Activated CD8-positive, alpha-beta memory T cell treated with anti-CD3 and anti-CD28 coated beads, Interleukin-2, amount 10 ng/mL, durations not matched to agents 7 days and 5 days (primary cell): ENCODE measurements at regions of chr17 and their contacts with region 1.

Region 1: DNA sequence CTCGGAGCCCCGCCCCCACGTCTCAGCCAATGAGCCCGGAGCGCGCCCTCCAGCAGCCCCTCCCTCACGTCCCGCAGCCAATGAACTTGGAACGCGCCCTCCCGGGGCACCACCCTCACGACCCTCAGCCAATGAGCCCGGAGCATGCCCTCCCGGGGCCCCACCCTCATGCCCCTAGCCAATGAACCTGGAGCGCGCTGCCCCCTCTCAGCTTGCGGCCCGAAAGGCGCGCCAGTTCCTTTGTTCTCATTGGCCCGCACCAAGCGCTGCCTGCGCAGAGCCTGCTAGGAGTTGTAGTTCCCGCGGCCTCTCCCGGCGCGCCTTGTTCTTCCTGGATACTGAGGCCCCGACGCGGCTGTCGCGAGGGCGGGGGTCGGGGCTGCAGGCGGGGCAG is at the start of gene LRRC45:
- DNase-seq: peak; percentile 100
- ATAC-seq: peak; percentile 95
- H3K4me3 Mint-ChIP-seq: peak within 1 kb of the TSS; percentile 82
- H3K27ac Mint-ChIP-seq: peak within 1 kb of the TSS; percentile 78
- H3K4me1 Mint-ChIP-seq: peaks cover 32% of the 10 kb centered on the region
- H3K27me3 Mint-ChIP-seq: no peaks in the 10 kb centered on the region
- total RNA-seq, gene LRRC45: 45.4 to 61.6 TPM

Region 2: DNA sequence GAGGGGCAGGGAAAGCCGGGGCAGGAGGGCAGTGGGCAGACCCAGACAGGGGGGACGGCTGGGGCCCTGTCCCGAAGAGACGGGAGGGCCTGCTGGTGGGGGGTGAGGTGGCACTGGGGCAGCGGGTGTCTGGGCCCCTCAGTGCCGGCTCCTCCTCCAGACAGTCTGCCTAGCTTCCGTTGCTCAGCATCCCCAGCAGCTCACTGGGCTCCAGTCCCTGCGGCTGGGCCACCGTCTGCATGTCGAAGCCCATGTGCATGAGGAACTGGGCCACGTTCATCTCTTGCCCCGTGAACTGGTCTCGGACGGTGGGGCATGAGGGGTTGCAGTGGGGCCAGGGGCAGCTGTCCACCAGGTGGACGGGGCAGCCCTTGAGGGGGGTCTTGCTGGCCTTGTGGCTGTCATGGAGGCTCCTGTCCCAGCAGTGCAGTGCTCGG is 70.2 kb before region 1 on chr17:
- CTCF ChIA-PET with region 1: interaction called, 14 read pairs
- DNase-seq: no peak
- ATAC-seq: no peak
- H3K4me3 Mint-ChIP-seq: no peak overlapping the region
- H3K27ac Mint-ChIP-seq: no peak overlapping the region
- H3K4me1 Mint-ChIP-seq: no peaks in the 10 kb centered on the region
- H3K27me3 Mint-ChIP-seq: peaks cover 14% of the 10 kb centered on the region

Region 3: GRCh38 chr17:81967533-81968395 is 55.2 kb before region 1 on chr17:
- CTCF ChIA-PET with region 1: interaction called, 20 read pairs
- DNase-seq: peak; percentile 90
- ATAC-seq: peak; percentile 97
- H3K4me3 Mint-ChIP-seq: peak overlapping the region; percentile 47
- H3K27ac Mint-ChIP-seq: peak overlapping the region; percentile 43
- H3K4me1 Mint-ChIP-seq: peaks cover 7% of the 10 kb centered on the region
- H3K27me3 Mint-ChIP-seq: peaks cover 23% of the 10 kb centered on the region

Region 4: GRCh38 chr17:82003411-82004381 is 19.3 kb before region 1 on chr17:
- CTCF ChIA-PET with region 1: interaction called, 21 read pairs
- DNase-seq: no peak
- ATAC-seq: no peak
- H3K4me3 Mint-ChIP-seq: no peak overlapping the region
- H3K27ac Mint-ChIP-seq: no peak overlapping the region
- H3K4me1 Mint-ChIP-seq: no peaks in the 10 kb centered on the region
- H3K27me3 Mint-ChIP-seq: no peaks in the 10 kb centered on the region

Region 5: DNA sequence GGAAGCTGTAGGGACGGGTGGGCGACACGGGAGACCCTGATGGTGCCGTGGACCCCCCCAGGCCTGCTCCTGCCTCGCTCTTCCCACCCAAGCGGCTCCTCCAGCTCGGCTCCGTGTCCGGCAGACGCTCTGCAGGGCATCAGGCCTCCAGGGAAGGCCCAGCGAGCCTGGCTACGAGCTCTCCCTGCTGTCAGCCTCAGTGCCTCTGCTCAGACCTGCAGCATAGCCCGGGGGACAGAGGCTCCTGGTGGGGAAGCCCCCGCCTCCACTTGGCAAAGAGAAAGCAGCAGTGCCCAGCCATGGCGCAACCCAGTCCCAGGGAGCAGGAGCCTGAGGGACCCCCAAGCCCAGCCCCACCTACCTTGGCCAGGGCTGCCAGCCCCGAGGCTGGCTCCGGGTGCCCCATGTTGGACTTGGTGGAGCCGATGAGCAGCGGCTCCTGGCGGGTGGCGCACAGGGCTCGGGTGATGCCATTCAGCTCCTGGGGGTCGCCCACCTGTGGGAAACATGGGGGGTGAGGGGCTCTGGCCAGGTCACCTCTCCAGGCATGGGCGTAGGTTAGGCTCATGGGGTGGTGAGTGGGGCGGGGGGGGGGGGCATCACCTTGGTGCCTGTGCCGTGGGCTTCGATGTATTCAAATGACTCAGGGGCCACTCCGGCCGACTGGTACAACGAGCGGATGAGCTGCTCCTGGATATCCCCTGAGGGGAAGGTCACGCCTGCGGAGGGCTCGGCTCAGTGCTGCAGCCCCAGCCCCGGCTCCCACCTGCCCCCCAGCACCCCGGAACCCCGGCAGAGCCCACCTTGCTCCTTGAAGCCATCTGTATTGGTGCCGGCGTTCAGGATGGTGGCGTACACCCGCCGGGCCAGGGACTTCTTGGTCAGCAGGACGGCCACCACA is 69.4 kb after region 1 on chr17:
- CTCF ChIA-PET with region 1: no interaction called
- DNase-seq: no peak
- ATAC-seq: no peak
- H3K4me3 Mint-ChIP-seq: no peak overlapping the region
- H3K27ac Mint-ChIP-seq: no peak overlapping the region
- H3K4me1 Mint-ChIP-seq: peaks cover 8% of the 10 kb centered on the region
- H3K27me3 Mint-ChIP-seq: no peaks in the 10 kb centered on the region

Region 6: GRCh38 chr17:82153745-82154375 is 130.9 kb after region 1 on chr17:
- CTCF ChIA-PET with region 1: interaction called, 13 read pairs
- DNase-seq: peak; percentile 84
- ATAC-seq: peak; percentile 98
- H3K4me3 Mint-ChIP-seq: no peak overlapping the region
- H3K27ac Mint-ChIP-seq: no peak overlapping the region
- H3K4me1 Mint-ChIP-seq: peaks cover 2% of the 10 kb centered on the region
- H3K27me3 Mint-ChIP-seq: no peaks in the 10 kb centered on the region

Region 7: DNA sequence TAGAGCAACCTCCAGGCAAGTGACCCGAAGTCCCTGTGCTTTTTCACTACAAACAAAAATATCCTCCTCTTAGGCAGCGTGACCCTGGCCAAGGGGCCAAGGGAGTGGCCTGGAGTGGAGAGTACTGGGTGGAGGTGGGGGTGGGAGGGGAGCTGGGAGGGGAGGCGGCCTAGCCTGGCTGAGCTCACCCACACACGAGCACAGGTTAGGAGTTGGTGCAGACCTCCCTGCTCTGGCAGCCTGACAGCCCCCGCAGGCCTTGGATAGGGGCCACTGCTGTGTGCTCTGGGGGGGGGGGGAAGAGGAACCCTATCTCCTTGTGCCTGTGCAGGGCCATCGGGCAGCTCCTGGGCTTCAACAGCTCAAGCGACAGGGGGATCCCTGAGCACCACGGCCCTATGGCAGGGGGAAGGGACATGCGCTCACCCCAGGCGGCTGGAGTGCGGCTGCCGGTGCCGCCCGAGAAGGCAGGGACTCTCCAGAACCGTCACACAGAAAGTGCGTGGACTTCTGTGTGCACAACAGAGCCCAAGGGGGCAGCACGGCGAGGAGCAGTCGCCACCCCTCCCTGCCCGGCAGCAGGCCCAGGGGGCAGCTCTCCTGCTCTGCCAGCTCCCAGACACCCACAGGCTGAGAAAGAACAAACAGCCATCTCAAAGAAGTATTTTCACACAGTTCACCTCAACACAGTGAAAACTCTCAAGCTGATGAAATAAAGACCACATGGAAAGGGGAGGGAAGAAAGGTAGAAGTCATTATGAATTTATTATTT is 219.1 kb after region 1 on chr17:
- CTCF ChIA-PET with region 1: no interaction called
- DNase-seq: no peak
- ATAC-seq: no peak
- H3K4me3 Mint-ChIP-seq: no peak overlapping the region
- H3K27ac Mint-ChIP-seq: peak overlapping the region; percentile 63
- H3K4me1 Mint-ChIP-seq: peaks cover 42% of the 10 kb centered on the region
- H3K27me3 Mint-ChIP-seq: no peaks in the 10 kb centered on the region

Region 8: DNA sequence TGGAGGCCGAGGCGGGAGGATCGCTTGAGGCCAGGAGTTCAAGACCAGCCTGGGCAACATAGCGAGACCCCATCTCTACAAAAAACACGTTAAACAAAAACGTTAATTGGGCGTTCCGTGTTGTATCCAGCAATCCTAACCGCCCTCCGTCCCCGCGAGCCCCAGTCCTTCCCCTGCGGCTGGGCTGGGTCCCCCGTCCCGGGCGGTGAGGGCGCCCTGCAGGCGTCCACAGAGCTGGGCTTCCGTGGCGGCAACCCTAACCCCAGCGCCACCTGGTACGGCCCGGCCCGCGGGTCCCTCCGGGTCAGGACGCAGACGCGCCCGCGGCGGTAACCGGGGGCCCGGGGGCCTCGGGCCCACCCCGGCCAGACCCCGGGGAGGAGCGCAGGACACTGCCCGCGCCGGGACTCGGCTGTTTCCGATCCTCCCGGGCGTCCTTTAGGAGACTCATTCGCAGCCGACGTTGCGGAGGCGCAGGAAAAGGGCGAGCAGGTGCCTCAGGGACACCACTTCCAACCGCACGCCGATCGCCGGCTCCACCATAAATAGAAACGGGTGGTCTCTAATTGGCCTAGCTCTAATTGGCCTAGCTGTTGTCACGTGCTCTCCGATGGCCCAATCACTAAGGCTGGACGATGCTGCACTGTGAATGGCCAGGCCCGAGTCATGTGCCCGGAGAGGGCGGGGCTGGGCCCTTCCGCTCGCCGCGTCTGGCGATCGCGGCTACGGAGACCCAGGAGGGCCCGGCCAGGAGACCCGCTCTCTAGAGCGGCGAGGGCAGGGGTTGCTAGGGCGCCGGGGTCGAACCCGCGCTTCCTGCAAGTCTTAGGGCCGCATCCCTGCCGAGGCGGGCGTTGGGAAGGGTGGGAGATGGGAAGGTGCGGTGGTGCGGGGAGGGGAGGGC is 269.5 kb after region 1 on chr17:
- CTCF ChIA-PET with region 1: no interaction called
- DNase-seq: peak; percentile 98
- ATAC-seq: peak; percentile 95
- H3K4me3 Mint-ChIP-seq: peak overlapping the region; percentile 75
- H3K27ac Mint-ChIP-seq: peak overlapping the region; percentile 84
- H3K4me1 Mint-ChIP-seq: peaks cover 44% of the 10 kb centered on the region
- H3K27me3 Mint-ChIP-seq: no peaks in the 10 kb centered on the region